GM23248 (cell line): ENCODE measurements at regions of chr10 and their contacts with region 1.

Region 1: GRCh38 chr10:12264204-12264940 is 68.4 kb downstream of the CDC123 start:
- DNase-seq: peak; percentile 82
- H3K4me3 ChIP-seq: peak overlapping the region; percentile 69
- H3K27ac ChIP-seq: no peak overlapping the region
- H3K4me1 ChIP-seq: peaks cover 3% of the 10 kb centered on the region; the same call in 1 of the 2 replicates
- H3K27me3 ChIP-seq: no peaks in the 10 kb centered on the region

Region 2: GRCh38 chr10:12195603-12196506 is 68.5 kb before region 1 on chr10 and contains the starts of genes CDC123 and NUDT5:
- in situ Hi-C with region 1: no loop called
- DNase-seq: peak; percentile 97
- H3K4me3 ChIP-seq: peak within 1 kb of the TSS; percentile 99
- H3K27ac ChIP-seq: peak within 1 kb of the TSS; percentile 85
- H3K4me1 ChIP-seq: peaks cover 33% of the 10 kb centered on the region
- H3K27me3 ChIP-seq: no peaks in the 10 kb centered on the region
- total RNA-seq, gene CDC123: 81.3 and 100 TPM in 2 replicates
- total RNA-seq, gene NUDT5: 26.9 and 33.2 TPM in 2 replicates

Region 3: DNA sequence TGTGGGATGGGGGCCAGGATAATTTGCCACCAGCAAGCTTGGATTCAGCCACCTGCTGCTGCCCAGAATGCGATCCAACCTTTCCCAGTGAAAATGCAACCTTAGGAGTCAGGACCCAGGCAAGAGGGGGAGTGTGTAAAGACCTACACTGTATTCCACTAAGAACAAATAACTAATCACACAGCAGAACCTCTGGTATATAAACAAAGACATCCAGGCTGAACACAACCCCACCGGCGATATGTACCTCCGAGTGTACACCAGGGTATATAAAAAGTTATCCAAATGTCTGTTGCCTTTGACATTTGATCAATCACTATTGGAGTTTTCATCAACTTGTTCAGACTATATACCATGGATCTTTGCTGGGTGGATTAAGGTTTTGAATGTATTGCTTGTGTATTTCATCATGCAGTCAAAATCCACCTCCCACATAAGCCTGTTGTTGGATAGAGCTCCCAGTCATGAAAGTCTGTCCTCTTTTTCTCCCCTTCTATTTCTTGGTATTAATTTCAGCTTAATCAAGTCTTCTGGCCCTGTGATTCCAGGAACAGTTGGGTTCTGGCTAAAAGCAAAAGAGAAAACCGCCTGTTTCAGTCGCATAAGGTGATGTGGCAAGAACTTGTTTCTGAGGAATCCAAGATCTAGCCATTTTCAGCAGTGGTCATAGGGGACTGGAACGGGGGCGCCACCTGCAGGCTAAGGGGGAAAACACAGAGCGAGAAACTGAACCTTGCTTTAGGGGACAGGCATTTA is 446.4 kb after region 1 on chr10:
- in situ Hi-C with region 1: loop called (anchors 10 kb)
- DNase-seq: peak; percentile 88
- H3K4me3 ChIP-seq: no peak overlapping the region
- H3K27ac ChIP-seq: peak overlapping the region; percentile 65
- H3K4me1 ChIP-seq: peaks cover 52% of the 10 kb centered on the region
- H3K27me3 ChIP-seq: no peaks in the 10 kb centered on the region

Region 4: GRCh38 chr10:13099666-13100348 is 835.4 kb after region 1 on chr10 and contains the start of gene OPTN:
- in situ Hi-C with region 1: loop called (anchors 25 kb)
- DNase-seq: peak; percentile 89
- H3K4me3 ChIP-seq: peak within 1 kb of the TSS; percentile 90
- H3K27ac ChIP-seq: peak within 1 kb of the TSS; percentile 62
- H3K4me1 ChIP-seq: peaks cover 20% of the 10 kb centered on the region; the same call in 1 of the 2 replicates
- H3K27me3 ChIP-seq: no peaks in the 10 kb centered on the region
- total RNA-seq, gene OPTN: 41.2 and 50.6 TPM in 2 replicates